Astrocyte of the cerebellum (primary cell): ENCODE measurements at regions of chr6 and their contacts with region 1.

Region 1: DNA sequence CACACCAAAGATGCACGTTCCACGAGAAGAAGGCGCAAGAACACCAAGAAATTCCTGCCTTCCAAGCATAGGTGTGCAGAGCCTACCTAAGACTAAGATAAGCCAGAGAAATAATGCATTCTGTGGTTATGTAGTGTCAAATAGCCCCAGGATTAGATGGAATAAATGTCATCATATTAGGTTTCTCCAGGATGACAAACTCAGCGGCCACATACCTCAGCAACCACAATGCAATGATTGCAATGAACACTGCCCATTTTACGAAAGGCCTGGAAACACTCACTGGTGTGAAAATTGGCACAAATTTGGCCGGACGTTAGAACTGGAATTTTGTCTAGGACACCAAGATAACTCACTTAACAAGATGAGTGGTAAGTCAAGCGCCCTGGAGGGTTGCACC is 129.7 kb downstream of the SLC22A3 start:
- DNase-seq: no peak
- H3K4me3 ChIP-seq: no peak overlapping the region
- CTCF ChIP-seq: no peak

Region 2: GRCh38 chr6:159679091-159680077 is 798.5 kb before region 1 on chr6:
- in situ Hi-C with region 1: no loop called
- DNase-seq: no peak
- H3K4me3 ChIP-seq: no peak overlapping the region
- CTCF ChIP-seq: no peak

Region 3: DNA sequence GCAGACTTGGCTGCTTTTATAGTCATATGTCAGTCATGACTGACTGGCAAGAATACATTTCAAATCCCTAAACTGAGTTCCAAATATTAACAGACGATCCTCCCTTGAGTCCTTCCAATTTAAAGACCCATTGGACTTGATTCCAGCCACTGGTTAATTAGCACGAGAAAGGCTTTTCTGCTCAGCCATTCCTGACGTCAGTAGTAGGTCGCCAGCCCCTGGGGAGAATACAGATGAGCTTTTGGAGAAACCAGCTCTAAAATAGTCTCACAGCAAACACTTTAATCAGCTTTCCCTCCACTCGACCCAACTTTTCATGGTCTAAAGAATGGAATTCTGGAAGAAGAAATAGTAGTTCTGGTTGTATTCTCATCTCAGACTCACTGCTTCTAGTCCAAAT is 38.1 kb before region 1 on chr6:
- in situ Hi-C with region 1: loop called (anchors 5 kb)
- DNase-seq: no peak
- H3K4me3 ChIP-seq: no peak overlapping the region
- CTCF ChIP-seq: no peak

Region 4: GRCh38 chr6:160534050-160534696 is 56.3 kb after region 1 on chr6:
- in situ Hi-C with region 1: no loop called
- DNase-seq: peak; percentile 26
- H3K4me3 ChIP-seq: no peak overlapping the region
- CTCF ChIP-seq: peak; percentile 93